Tibial artery (tissue), 4 donors: ENCODE measurements at regions of chr2 and their contacts with region 1.

Region 1: GRCh38 chr2:176110975-176111663 is 4.0 kb downstream of the HOXD11 start:
- DNase-seq: no peak
- H3K4me3 ChIP-seq: no peak overlapping the region
- H3K27ac ChIP-seq: no peak overlapping the region
- H3K4me1 ChIP-seq: peaks cover 0 to 33% (median 27%) of the 10 kb centered on the region in 4 donors
- H3K27me3 ChIP-seq: peaks cover 19 to 99% of the 10 kb centered on the region in 2 donors
- CTCF ChIP-seq: peak; percentile 26 to 37

Region 2: GRCh38 chr2:175154661-175155082 is 956.4 kb before region 1 on chr2:
- intact Hi-C with region 1: no loop called
- DNase-seq: no peak
- H3K4me3 ChIP-seq: no peak overlapping the region
- H3K27ac ChIP-seq: no peak overlapping the region
- H3K4me1 ChIP-seq: peaks cover 0 to 54% (median 5%) of the 10 kb centered on the region in 4 donors
- H3K27me3 ChIP-seq: no peaks in the 10 kb centered on the region
- CTCF ChIP-seq: no peak

Region 3: GRCh38 chr2:177148477-177149154 is 1037.5 kb after region 1 on chr2:
- intact Hi-C with region 1: loop called (anchors 10 kb)
- DNase-seq: peak; percentile 64 to 81
- H3K4me3 ChIP-seq: peak overlapping the region; percentile 28 to 48
- H3K27ac ChIP-seq: no peak overlapping the region
- H3K4me1 ChIP-seq: peaks cover 0 to 13% (median 8%) of the 10 kb centered on the region in 4 donors
- H3K27me3 ChIP-seq: peaks cover 0 to 41% of the 10 kb centered on the region in 2 donors
- CTCF ChIP-seq: peak; percentile 55 to 74